Mammary epithelial cell (primary cell): ENCODE measurements at regions of chr11 and their contacts with region 1.

Region 1: DNA sequence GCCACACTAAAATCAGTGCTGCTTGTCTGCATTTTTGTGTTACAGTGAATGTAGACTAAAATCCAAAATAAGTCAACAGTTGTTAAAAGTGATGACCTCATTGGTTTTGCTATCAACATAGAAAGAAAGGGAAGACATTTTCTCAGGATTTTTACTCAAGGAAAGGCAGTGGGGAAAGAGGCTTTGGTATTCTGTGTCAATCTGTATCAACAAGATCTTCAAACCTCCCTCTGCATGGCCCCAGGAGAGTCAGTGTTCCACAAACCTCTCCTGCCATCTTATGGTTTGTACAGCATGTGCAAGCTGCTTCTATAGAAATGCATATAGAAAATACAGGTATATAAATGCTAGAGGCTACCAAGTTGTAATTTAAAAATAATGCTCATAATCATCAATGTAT is 13.8 kb upstream of the OR51M1 start:
- DNase-seq: no peak
- H3K4me3 ChIP-seq: no peak overlapping the region
- H3K27ac ChIP-seq: no peak overlapping the region
- H3K4me1 ChIP-seq: no peaks in the 10 kb centered on the region
- H3K27me3 ChIP-seq: no peaks in the 10 kb centered on the region
- CTCF ChIP-seq: peak; percentile 28 to 36

Region 2: DNA sequence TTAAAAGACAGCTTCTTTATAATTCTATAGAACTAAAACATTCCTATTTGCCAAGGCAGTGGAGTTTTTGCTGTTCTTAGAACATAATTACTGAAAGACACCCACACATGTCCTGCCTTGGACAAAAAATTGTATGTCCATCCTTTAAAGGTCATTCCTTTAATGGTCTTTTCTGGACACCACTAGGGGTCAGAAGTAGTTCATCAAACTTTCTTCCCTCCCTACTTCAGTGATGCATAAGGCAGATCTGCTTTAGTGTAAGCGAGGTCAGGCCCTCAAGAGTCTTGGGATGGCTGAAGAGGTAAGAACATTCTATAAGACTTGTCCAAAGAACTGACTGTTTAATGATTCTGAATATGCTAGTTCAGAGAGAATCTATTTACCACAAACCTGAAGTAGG is 165.0 kb before region 1 on chr11:
- CTCF ChIA-PET with region 1: no interaction called
- dilution Hi-C with region 1: no loop called
- in situ Hi-C with region 1: no loop called
- intact Hi-C with region 1: loop called (anchors 5 kb)
- DNase-seq: peak; percentile 58
- H3K4me3 ChIP-seq: no peak overlapping the region
- H3K27ac ChIP-seq: no peak overlapping the region
- H3K4me1 ChIP-seq: no peaks in the 10 kb centered on the region
- H3K27me3 ChIP-seq: no peaks in the 10 kb centered on the region
- CTCF ChIP-seq: peak; percentile 66 to 67